AG04449 (cell line): ENCODE measurements at regions of chr3 and their contacts with region 1.

Region 1: GRCh38 chr3:157201648-157202278 is 41.8 kb upstream of the CCNL1 start:
- DNase-seq: no peak
- H3K4me3 ChIP-seq: no peak overlapping the region
- CTCF ChIP-seq: peak; percentile 25

Region 2: GRCh38 chr3:157159762-157160657 is 41.8 kb before region 1 on chr3 and contains the start of gene CCNL1:
- CTCF ChIA-PET with region 1: interaction called, 16 read pairs
- POLR2A ChIA-PET with region 1: interaction called, 5 read pairs
- DNase-seq: peak; percentile 92
- H3K4me3 ChIP-seq: peak within 1 kb of the TSS; percentile 89
- CTCF ChIP-seq: no peak

Region 3: DNA sequence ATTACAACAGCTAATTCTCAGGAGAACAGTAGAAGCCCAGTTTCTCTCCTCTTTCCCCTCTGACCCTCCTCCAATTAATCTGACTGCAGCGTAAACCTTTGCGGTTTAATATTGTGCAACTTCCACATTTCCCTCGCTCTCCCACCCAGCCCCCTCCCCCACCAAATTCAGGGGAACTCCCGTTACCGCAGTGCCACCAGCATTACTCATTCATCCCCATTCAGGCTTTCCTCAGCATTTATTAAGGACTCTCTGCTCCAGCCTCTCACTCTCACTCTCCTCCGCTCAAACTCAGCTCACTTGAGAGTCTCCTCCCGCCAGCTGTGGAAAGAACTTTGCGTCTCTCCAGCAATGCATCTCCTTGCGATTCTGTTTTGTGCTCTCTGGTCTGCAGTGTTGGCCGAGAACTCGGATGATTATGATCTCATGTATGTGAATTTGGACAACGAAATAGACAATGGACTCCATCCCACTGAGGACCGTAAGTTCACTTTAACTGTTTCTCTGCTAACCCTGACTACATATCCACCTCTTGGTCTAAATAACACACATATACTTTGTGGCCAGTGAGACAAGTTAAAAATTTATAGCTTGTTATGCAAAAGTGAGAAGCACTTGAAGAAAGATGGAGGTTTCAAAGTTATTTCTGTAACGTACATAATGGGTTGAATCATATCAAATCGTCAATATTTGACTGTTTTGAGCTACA is 235.0 kb after region 1 on chr3 and contains the start of gene PTX3:
- CTCF ChIA-PET with region 1: interaction called, 29 read pairs
- POLR2A ChIA-PET with region 1: no interaction called
- DNase-seq: no peak
- H3K4me3 ChIP-seq: peak within 1 kb of the TSS; percentile 70
- CTCF ChIP-seq: no peak

Region 4: DNA sequence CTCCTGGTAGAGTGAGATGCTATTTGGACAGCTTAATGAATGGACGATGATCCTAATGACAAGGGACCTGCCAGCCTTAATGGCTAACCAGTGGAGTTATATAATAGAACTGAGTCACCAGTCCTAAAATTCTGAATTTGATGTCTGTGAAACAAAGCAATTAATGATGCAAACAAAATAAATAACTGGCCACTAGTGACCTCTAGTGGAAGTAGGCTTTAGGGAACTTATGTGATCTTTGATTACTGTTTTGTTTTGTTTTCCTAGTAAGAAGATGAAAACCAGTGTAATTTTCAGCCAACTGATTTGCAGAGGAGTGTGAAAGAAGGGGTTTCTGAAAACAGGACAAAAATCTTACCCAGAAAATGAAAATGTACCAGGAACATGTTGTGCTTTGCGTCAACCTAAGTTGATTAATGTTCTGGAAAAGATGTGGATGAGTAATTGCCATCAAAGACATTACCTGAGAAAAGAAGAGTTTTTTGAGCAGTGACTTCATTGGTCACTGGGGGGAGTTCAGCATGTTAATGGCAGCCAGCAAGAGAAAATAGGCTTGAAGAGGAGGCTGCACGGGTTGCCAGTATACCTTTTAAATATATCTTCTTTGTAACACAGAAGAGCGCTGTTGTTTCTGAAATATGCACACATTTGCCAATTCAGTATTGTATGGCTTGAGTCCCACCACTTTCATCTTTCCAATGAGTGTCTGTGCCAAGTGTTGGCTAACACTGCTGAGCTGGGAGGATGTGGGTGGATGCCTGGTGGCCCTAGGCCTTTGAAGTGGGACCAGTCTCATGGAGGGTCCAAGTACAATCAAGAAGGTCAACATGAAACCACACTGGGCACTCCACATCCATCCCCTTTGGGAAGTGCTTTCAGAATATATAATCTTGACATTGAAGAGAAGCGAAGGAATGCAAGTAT is 292.1 kb after region 1 on chr3:
- CTCF ChIA-PET with region 1: interaction called, 172 read pairs
- POLR2A ChIA-PET with region 1: no interaction called
- DNase-seq: no peak
- H3K4me3 ChIP-seq: no peak overlapping the region
- CTCF ChIP-seq: peak; percentile 45

Region 5: DNA sequence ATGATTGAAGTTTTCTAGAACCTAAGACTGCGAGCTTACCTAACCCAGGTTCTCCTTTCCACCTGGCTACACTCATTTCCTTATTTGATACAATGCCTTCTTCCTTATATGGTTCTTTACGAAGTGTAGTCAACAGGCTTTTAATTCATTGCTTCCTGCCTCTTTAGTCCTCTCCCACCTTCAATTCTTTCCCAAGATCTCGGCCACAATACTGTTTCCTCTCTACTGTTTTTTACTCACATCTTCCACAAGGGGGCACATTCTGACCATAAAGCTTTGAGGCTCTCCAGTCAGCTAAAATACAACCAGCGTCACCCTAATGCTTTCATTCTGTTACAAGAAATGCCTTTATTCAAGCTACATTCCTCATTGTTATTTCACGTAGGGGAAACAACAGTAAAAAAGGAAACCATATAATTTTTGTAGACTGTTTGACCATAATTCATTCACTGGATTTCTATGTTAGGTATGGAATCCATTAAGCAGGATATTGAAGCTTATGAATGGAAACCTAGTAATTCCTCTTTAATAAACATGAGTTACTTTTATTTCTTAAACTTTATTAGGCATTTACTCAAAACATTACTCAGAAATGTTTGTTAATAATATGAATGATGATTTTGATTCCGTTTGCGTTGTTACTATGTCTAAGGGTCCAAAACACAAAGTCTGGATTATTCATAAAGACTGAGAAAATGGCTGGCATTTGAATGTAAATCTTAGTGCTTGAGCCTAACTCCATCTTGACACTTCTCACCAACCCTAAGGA is 330.9 kb after region 1 on chr3:
- CTCF ChIA-PET with region 1: interaction called, 26 read pairs
- POLR2A ChIA-PET with region 1: no interaction called
- DNase-seq: peak; percentile 71
- H3K4me3 ChIP-seq: peak overlapping the region; percentile 44
- CTCF ChIP-seq: peak; percentile 59